Aorta (tissue), 5 donors: ENCODE measurements at regions of chr1 and their contacts with region 1.

Region 1: GRCh38 chr1:241834733-241835377 is 13.1 kb upstream of the EXO1 start:
- DNase-seq: no peak
- ATAC-seq: no peak
- H3K4me3 ChIP-seq: no peak overlapping the region
- H3K27ac ChIP-seq: no peak overlapping the region
- H3K4me1 ChIP-seq: no peaks in the 10 kb centered on the region
- H3K27me3 ChIP-seq: no peaks in the 10 kb centered on the region

Region 2: GRCh38 chr1:241611063-241611462 is 223.8 kb before region 1 on chr1:
- intact Hi-C with region 1: loop called (anchors 2 to 5 kb)
- DNase-seq: no peak
- ATAC-seq: peak; percentile 81
- H3K4me3 ChIP-seq: no peak overlapping the region
- H3K27ac ChIP-seq: no peak overlapping the region
- H3K4me1 ChIP-seq: no peaks in the 10 kb centered on the region
- H3K27me3 ChIP-seq: no peaks in the 10 kb centered on the region

Region 3: GRCh38 chr1:241870290-241870689 is 35.4 kb after region 1 on chr1:
- intact Hi-C with region 1: no loop called
- DNase-seq: no peak
- ATAC-seq: no peak
- H3K4me3 ChIP-seq: no peak overlapping the region
- H3K27ac ChIP-seq: no peak overlapping the region
- H3K4me1 ChIP-seq: no peaks in the 10 kb centered on the region
- H3K27me3 ChIP-seq: no peaks in the 10 kb centered on the region